ENCODE measurements at regions of chr18 and their contacts with region 1.

Region 1: DNA sequence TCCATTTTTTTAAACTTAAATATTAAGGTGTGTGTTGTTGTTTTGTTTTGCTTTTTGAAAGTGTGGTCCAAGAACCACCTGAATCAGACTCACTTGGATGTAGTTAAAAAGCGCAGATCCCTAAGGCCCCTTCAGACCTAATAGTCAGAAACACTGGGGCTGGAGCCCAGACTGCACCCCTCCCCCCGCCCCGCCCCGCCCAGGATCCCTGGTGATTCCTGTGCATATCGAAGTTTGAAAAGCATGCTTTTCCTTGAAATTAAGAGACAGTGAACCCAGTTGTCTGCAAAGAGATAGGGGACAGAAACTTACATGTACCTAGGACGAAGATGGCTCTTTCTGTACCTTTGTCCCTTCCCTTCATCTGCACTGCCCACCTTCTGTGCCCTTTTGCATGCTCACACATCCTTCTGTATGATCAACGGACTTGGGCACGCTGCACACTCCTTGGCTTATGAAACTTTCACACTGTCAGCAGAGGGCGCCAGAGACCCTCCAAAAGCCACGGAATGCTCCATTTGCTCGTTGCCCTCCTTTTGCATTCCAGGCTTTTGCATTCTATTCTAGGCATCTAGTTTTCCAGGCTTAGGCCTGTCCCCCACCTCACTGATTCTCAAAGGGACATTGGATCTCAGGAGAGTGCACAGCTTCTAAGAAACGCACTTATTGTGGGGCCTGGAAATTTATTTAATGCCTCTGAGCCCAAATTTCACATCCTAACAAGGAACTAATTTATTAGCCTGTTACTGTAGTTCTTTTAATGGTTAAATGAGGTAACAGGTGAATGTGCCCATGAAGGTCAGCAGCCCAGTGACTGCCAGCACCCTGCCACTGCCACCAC is 32.8 kb upstream of the SLC14A1 start:
- DNase-seq: peak; percentile 38 to 79 (median 46)
- ATAC-seq: peak; percentile 73
- H3K4me3 ChIP-seq: no peak overlapping the region
- H3K27ac ChIP-seq: no peak overlapping the region
- H3K4me1 ChIP-seq: peaks cover 14 to 21% of the 10 kb centered on the region in 2 experiments; a peak in 4 of 5 replicates
- H3K27me3 ChIP-seq: no peaks in the 10 kb centered on the region
- CTCF ChIP-seq: peak; percentile 76 to 81 (median 81)
- EP300 ChIP-seq: no peak
- POLR2A ChIP-seq: no peak
- RAD21 ChIP-seq: peak; percentile 77 to 88

Region 2: GRCh38 chr18:45670281-45670962 is 20.8 kb before region 1 on chr18:
- CTCF ChIA-PET with region 1: no interaction called
- POLR2A ChIA-PET with region 1: interaction called, 5 read pairs
- in situ Hi-C with region 1: no loop called
- intact Hi-C with region 1: loop called (anchors 1 kb)
- DNase-seq: peak; percentile 71 to 81 (median 72)
- ATAC-seq: peak; percentile 93
- H3K4me3 ChIP-seq: no peak overlapping the region
- H3K27ac ChIP-seq: peak overlapping the region; percentile 85
- H3K4me1 ChIP-seq: peaks cover 12 to 19% of the 10 kb centered on the region in 2 experiments
- H3K27me3 ChIP-seq: no peaks in the 10 kb centered on the region
- CTCF ChIP-seq: no peak
- EP300 ChIP-seq: peak; percentile 88
- POLR2A ChIP-seq: no peak
- RAD21 ChIP-seq: no peak

Region 3: GRCh38 chr18:45879681-45880655 is 188.8 kb after region 1 on chr18:
- CTCF ChIA-PET with region 1: interaction called, 9 read pairs
- POLR2A ChIA-PET with region 1: no interaction called
- in situ Hi-C with region 1: no loop called
- intact Hi-C with region 1: loop called (anchors 2 kb)
- DNase-seq: peak; percentile 63 to 70 (median 66)
- ATAC-seq: peak; percentile 99
- H3K4me3 ChIP-seq: no peak overlapping the region
- H3K27ac ChIP-seq: no peak overlapping the region
- H3K4me1 ChIP-seq: peaks cover 0 to 2% of the 10 kb centered on the region in 2 experiments; a peak in 1 of 5 replicates
- H3K27me3 ChIP-seq: no peaks in the 10 kb centered on the region
- CTCF ChIP-seq: peak; percentile 83 to 91 (median 84)
- EP300 ChIP-seq: no peak
- POLR2A ChIP-seq: no peak
- RAD21 ChIP-seq: peak; percentile 77 to 78

Region 4: DNA sequence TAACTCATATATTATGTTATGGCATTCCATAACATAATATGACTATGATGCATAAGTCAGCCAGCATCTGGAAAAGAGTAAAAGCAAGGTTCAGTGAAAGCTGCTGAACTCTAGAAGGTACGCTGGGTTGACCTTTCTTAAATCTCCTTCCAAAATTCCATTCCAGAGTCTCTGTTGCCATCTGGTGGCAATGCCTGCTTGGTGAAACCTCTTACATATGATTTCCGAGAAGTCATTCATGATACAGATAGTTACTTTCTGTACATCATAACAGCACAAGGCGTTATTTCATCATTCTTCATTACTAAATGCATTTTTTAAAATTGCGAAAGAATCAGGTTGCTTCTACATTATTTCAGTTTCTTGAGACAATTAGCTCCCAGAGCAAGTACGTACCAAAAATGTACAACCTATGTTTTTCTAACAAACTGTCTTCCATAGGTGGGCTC is 282.9 kb after region 1 on chr18:
- CTCF ChIA-PET with region 1: interaction called, 6 read pairs
- POLR2A ChIA-PET with region 1: no interaction called
- in situ Hi-C with region 1: no loop called
- intact Hi-C with region 1: loop called (anchors 1 kb)
- DNase-seq: peak; percentile 13 to 73 (median 29)
- ATAC-seq: peak; percentile 91
- H3K4me3 ChIP-seq: no peak overlapping the region
- H3K27ac ChIP-seq: no peak overlapping the region
- H3K4me1 ChIP-seq: peaks cover 0 to 5% of the 10 kb centered on the region in 2 experiments; a peak in 1 of 5 replicates
- H3K27me3 ChIP-seq: no peaks in the 10 kb centered on the region
- CTCF ChIP-seq: peak; percentile 54 to 89 (median 68); a peak in 5 of 6 replicates
- EP300 ChIP-seq: no peak; the same call in 1 of the 2 replicates
- POLR2A ChIP-seq: no peak
- RAD21 ChIP-seq: peak; percentile 77 to 88

Region 5: DNA sequence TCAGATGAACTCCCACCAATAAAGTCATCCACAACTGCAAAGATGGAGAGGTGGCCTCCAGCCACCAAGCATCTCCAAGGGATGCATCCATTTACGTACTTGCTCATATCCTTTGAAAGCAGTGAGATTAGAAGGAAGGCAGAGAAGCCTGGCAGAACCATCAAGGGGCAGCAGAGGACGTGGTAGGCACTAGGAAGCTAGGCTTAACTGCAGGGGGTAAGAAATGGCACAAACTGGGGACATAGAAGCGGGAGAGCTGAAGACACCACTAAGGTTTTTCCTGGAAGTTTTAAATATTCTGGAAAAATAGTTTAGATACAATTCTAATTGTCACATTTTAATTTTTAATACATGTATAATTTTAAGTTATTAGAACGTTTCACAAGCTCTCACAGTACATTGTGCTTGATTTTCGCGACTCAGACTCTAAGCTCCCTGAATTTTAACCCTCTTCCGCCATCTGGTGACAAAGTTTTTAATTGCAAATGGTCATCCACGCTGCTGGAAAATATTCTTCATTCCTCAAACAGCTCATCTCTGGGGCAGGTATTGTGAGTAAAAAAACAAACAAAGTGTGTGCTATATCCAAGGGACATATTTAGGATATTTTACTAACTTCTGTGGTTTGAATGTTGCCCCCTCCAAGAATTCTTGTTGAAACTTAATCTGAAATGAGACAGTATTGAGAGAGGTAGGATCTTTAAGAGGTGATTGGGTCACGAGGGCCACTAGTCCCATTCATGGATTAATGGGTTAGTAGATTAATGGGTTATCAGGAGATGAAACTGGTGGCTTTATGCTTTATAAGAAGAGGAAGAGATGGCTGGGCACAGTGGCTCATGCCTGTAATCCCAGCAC is 382.5 kb after region 1 on chr18:
- CTCF ChIA-PET with region 1: interaction called, 4 read pairs
- POLR2A ChIA-PET with region 1: no interaction called
- in situ Hi-C with region 1: no loop called
- intact Hi-C with region 1: loop called (anchors 1 kb)
- DNase-seq: peak; percentile 30 to 70 (median 38)
- ATAC-seq: peak; percentile 58
- H3K4me3 ChIP-seq: no peak overlapping the region
- H3K27ac ChIP-seq: no peak overlapping the region
- H3K4me1 ChIP-seq: peaks cover 3 to 31% of the 10 kb centered on the region in 2 experiments; a peak in 4 of 5 replicates
- H3K27me3 ChIP-seq: no peaks in the 10 kb centered on the region
- CTCF ChIP-seq: peak; percentile 53 to 68 (median 58); a peak in 4 of 6 replicates
- EP300 ChIP-seq: no peak
- POLR2A ChIP-seq: no peak
- RAD21 ChIP-seq: peak; percentile 79 to 85

Measured in K562 (cell line).